GM10248 (cell line): ENCODE measurements at regions of chr4 and their contacts with region 1.

Region 1: GRCh38 chr4:111748157-111748556 is 397.1 kb upstream of the FAM241A start:
- DNase-seq: no peak
- CTCF ChIP-seq: no peak

Region 2: DNA sequence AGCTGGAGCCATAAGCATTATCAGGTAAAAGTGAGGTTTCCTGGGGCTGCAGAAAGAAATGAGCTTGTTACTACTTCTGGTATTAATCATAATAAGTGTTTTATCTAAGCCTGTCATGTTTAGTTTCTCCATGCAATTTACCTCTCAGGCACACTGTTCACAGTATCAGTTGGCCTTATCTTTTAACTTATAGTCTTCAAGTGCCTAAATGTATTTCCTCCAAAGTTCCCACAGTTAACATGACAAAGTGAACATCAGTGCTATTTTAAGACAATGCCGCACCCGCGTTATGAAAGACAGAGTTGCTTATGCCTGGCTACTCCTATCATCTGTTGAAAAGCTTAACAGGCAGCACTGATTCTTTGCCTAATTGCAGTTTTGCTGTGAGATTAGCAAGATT is 11.6 kb before region 1 on chr4:
- CTCF ChIA-PET with region 1: interaction called, 10 read pairs
- POLR2A ChIA-PET with region 1: no interaction called
- DNase-seq: no peak
- CTCF ChIP-seq: no peak